Left lung (tissue), 14 donors: ENCODE measurements at regions of chr2 and their contacts with region 1.

Region 1: DNA sequence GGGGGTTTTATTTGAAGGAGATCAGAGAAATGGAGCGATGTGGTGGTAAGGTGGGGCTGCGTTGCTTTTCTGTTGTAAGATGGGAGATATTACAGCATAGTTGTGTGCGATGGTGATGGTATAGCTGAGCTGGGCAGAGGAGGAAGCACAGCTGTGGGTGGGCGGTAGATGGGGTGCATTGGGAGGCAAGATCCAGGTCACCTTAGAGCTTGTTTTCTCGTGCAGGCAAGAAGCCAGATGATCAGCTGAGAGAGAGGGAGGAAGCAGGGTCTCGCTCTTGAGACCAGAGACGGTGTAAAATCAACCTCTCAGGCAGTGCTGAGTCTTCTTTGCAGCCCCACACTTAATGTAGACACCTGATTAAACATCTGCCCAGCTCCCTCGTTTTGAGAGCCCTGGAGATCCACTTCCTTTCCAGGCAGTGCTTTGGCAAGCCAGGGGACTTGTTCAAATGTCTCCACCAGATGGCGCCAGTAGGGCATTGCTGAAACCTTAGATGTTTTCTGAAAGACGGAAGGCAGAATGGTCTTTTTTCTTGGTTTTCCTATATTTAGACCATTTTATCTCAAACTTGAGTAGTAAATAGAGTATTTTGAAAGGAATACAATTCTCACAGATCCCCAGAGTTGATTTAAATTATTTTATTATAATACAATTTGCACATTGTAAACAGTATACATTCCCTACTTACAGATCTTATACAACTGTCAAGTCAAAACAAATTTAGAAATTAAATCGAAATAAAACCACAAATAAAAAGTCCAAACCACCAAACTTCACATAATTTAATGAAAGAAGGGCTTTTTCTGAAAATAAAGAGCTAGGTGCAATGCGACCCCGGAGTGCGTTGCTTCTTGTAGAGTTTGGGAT is 21.1 kb upstream of the LYPD6B start:
- DNase-seq: peak in 3 of 4 donors; percentile 75 to 89 (median 80)
- ATAC-seq: peak; percentile 80
- H3K4me3 ChIP-seq: no peak overlapping the region
- H3K27ac ChIP-seq: no peak overlapping the region
- H3K4me1 ChIP-seq: peaks cover 6 to 21% of the 10 kb centered on the region in 2 donors
- H3K27me3 ChIP-seq: no peaks in the 10 kb centered on the region
- CTCF ChIP-seq: peak; percentile 80 to 90

Region 2: DNA sequence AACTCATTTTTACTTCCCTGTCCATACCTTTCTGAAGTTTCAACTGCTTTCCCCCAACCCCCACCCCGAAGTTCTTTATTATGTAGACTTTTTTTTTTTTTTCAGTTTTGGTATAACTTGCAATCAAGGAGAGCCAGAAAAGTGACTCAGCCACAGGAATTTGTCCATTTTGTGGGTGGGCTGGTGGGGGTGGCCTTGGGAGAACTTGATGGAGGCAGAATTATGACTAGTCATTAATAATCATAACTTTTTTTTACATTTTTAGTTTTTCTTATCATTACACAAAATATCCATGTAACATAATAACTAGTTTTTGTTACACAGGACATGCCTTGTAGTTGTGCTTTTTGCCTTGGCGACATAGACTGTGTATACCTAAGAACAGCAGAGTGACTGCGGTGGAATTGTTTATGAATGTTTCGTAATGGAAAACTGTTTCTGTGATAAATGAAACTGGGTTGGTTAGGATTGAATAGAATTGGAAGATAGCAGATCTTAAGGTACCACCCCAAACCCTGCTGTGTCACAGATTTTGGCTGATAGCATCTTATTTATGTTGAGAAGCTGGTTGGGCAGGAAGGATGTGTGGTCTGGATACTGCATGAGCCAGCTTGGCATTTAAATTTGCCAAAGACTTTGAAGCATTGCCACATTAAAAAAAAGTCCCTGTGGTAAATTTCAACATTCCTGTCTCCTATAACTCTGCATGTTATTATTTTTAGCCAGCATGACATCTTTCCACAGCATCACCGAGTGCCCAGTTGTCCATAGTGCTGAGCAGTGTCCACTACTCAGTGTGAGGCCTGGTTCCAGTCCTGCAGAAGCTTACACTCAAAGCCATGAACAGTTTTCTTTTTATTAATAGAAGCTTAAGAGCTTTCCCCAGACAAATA is 51.9 kb after region 1 on chr2:
- intact Hi-C with region 1: no loop called
- DNase-seq: no peak
- ATAC-seq: peak; percentile 55
- H3K4me3 ChIP-seq: no peak overlapping the region
- H3K27ac ChIP-seq: no peak overlapping the region
- H3K4me1 ChIP-seq: peaks cover 0 to 5% of the 10 kb centered on the region in 2 donors
- H3K27me3 ChIP-seq: no peaks in the 10 kb centered on the region
- CTCF ChIP-seq: no peak

Region 3: GRCh38 chr2:149313512-149313972 is 296.2 kb after region 1 on chr2:
- intact Hi-C with region 1: loop called in 1 of 2 experiments (anchors 10 kb)
- DNase-seq: peak in 2 of 4 donors; percentile 53 to 76
- ATAC-seq: peak; percentile 89
- H3K4me3 ChIP-seq: no peak overlapping the region
- H3K27ac ChIP-seq: no peak overlapping the region
- H3K4me1 ChIP-seq: peaks cover 0 to 2% of the 10 kb centered on the region in 2 donors
- H3K27me3 ChIP-seq: peaks cover 0 to 21% of the 10 kb centered on the region in 2 donors
- CTCF ChIP-seq: peak; percentile 49 to 68

Region 4: DNA sequence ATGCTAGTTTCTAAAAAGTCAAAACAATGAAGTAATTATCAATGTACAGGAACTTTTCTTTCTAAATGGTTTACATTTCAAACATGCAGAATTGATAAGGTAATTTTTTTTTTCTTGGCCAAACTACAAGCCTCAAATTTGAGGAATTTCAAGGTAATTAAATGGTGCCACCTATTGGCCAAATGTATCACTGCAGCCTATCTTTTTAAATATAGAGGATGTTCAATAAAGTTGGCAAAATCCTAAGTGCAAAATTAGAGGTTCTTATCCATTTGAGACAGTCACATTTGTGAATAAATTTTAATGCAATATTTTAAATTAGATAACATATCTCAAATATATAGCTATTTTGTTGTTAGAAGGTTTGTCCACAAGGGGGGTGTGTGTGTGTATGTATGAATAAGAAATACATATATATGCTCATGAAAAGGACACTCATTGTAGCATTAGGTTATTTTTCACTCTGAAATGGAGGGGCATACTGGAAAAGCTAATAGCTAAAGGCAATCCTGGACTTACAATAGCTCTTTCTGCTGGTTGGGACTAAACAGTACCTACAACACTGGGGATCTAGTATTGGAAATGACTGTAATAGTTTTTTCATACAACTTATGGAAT is 544.1 kb after region 1 on chr2:
- intact Hi-C with region 1: loop called in 1 of 2 experiments (anchors 5 kb)
- DNase-seq: peak in 2 of 4 donors; percentile 33 to 42
- ATAC-seq: peak; percentile 68
- H3K4me3 ChIP-seq: no peak overlapping the region
- H3K27ac ChIP-seq: no peak overlapping the region
- H3K4me1 ChIP-seq: peaks cover 5 to 15% of the 10 kb centered on the region in 2 donors
- H3K27me3 ChIP-seq: peaks cover 5% of the 10 kb centered on the region in 2 donors
- CTCF ChIP-seq: peak; percentile 71 to 85